ENCODE measurements at regions of chr20 and their contacts with region 1.

Region 1: DNA sequence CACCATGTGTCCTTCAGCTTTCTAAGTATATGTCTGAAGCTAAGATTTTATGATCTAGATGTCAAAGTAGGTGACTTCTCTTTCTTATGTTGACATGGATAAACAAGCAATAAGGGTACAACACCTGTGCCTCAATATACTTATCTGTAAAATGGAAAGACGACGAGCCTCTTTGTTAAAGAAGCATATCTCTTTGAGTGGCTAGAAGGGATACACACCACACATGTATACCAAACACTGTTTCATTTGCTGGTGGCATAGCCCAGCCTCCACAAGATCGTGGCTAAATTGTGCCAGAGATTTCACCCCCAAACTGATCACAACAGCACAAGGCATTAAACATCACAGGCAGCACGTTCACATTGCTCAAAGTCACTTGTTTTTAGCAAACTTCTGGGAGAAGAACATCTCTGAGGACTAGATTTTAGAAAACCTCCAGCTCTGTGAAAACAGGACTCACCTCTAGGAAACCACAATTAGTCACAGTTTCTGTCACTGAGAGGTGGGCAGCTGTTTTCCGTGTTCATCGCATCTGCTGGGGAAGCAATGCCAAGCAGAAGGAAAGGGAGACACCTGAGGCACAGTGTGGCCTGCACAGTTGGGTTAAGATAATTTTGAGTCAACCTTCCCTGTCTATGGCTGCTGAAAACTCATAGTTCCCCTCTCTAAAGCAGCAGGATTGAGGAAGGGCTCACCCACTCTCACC is 263.0 kb upstream of the PLCB4 start:
- DNase-seq: no peak
- H3K4me3 Mint-ChIP-seq: no peak overlapping the region
- H3K27ac Mint-ChIP-seq: no peak overlapping the region
- H3K4me1 Mint-ChIP-seq: peaks cover 4% of the 10 kb centered on the region
- H3K27me3 Mint-ChIP-seq: no peaks in the 10 kb centered on the region

Region 2: DNA sequence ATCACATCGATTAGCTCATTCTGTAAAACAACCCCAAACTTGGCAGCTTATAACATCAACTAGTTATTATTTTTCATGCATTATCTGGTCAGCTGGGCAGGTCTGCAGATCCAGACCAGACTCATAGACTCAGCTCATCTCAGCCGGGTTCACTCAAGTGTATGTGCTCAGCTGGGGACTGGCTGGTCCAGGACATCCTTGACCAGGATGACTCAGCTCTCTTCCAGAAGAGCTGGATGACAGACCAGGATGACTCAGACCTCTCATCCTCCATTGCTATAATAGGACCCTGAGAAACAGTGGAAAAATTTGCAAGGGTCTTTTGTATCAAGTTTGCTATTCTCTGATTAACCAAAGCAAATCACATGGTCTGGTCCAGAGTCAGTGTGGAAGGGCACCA is 49.5 kb before region 1 on chr20:
- intact Hi-C with region 1: loop called (anchors 2 kb)
- DNase-seq: no peak
- H3K4me3 Mint-ChIP-seq: no peak overlapping the region
- H3K27ac Mint-ChIP-seq: no peak overlapping the region
- H3K4me1 Mint-ChIP-seq: no peaks in the 10 kb centered on the region
- H3K27me3 Mint-ChIP-seq: no peaks in the 10 kb centered on the region

Measured in activated T-helper 2 cell treated with anti-CD3 and anti-CD28 coated beads, Interferon-gamma antibody, Interleukin-2, Interleukin-4, amounts not matched to agents 10 μg/mL and 5 μg/mL and 100 μg/mL, durations not matched to agents 14 hours and 24 hours and 36 hours (primary cell).